ENCODE measurements at regions of chr19 and their contacts with region 1.

Region 1: GRCh38 chr19:7919610-7920518 is at the start of gene SNAPC2:
- DNase-seq: peak; percentile 96
- total RNA-seq, gene SNAPC2: 12.3 TPM

Region 2: DNA sequence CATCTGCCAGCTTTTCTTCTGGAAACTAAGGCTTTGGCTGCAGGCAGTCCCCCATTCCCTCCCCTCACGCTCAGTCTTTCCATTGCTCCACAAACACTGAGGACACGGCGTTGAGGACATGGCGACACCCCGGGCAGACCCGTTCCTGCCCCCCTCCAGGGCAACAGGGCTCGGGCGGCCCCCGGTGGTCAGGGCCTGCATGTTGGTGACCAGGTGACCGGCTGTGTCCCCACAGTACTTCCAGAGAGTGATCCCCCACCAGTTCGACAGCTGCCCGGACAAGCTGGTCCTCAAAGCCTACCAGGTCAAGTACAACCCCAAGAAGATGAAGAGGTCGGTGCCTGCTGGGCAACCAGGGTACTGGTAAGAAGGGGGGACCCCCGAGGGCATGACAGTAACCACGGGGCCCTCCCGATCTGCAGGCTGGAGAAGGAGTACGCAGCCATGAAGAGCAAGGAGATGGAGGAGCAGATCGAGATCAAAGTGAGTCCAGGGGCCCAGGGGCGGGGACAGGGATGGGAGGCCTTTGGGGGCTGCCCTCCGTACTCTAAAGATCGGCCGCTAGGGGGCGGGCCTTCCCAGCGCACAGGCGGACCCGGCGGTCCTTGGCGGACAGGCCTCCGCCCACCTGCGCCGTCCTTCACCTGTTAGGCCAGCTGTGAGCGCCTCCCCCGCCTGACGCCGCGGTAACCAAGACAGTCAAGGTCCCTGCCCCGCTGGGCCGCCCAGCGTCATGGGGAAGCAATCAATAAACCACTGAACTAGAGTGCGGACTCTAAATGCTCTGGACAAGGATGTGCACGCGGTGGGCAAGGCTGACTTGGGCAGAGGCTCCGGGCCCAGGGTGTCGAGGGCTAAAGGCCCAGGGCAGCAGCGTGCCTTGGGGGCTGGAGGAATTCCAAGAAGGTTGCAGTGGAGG is 66.8 kb before region 1 on chr19:
- intact Hi-C with region 1: loop called (anchors 5 kb)
- DNase-seq: no peak

Measured in cardiac septum (tissue), 1 donor.